ENCODE measurements at regions of chr1 and their contacts with region 1.

Region 1: DNA sequence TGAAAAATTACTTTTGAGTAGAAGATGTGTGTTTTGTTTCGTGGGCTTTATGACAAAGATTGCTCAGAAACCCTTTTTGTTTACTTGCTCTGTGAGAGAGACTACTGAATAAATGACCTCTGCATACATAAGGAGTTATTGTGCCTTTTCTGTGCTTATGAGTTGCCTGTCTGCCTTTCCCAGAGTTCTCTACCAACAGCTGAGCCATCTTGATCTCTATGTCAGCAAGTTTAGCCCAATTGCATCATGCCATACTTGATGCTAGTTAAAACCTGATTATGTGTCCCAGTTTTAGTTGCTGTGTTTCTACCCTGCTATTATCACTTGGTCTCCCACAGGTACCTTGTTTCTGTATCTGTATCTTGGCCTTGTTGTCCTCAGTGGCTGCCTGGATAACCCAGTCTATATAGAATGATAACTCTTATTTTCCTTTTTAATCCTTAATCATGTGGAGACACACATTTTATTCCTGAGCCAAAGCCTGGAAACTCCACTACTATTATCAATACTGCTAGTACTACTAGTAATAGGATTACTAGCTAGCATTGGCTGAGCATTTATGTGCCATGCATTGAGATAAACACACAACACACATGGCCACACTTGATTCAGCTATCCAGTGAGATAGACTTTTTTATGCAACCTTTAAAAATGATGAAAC is 28.7 kb upstream of the GNG12 start:
- DNase-seq: no peak
- ATAC-seq: no peak
- H3K4me3 ChIP-seq: no peak overlapping the region
- H3K27ac ChIP-seq: no peak overlapping the region
- H3K4me1 ChIP-seq: no peaks in the 10 kb centered on the region
- H3K27me3 ChIP-seq: no peaks in the 10 kb centered on the region
- CTCF ChIP-seq: no peak
- POLR2A ChIP-seq: no peak

Region 2: DNA sequence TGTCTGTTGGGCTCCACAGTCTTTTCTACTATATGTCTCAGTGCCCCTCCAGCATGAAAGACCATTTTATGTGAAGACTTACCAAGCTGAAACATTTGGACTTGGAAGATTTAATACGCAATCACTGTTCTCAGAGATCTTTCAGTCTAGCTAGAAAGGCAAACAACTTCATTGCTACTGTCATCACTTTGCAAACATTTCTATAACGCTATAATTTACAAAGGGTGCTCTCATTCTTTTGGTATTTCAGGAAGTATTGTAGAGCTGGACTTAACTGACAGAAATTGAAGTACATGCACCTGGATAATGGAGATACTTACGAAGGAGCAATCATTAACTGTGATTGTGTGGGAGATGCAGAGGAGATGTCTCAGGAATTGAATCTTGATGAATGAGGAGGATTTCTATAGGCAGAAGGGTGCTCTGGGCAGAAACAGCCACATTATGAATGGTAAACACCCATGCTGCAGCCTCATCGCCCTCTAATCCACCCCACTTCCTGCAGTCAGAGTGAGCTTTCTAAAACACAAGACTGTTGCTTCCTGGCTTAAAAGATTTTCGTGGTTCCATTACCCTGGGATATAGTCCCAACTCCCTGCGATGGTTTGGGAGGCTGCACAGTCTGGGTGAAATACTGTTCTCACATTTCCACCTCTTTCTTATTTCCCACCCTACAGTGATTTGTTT is 46.4 kb after region 1 on chr1:
- in situ Hi-C with region 1: no loop called
- intact Hi-C with region 1: no loop called
- DNase-seq: no peak
- ATAC-seq: no peak
- H3K4me3 ChIP-seq: no peak overlapping the region
- H3K27ac ChIP-seq: no peak overlapping the region
- H3K4me1 ChIP-seq: no peaks in the 10 kb centered on the region
- H3K27me3 ChIP-seq: no peaks in the 10 kb centered on the region
- CTCF ChIP-seq: no peak
- POLR2A ChIP-seq: no peak

Region 3: DNA sequence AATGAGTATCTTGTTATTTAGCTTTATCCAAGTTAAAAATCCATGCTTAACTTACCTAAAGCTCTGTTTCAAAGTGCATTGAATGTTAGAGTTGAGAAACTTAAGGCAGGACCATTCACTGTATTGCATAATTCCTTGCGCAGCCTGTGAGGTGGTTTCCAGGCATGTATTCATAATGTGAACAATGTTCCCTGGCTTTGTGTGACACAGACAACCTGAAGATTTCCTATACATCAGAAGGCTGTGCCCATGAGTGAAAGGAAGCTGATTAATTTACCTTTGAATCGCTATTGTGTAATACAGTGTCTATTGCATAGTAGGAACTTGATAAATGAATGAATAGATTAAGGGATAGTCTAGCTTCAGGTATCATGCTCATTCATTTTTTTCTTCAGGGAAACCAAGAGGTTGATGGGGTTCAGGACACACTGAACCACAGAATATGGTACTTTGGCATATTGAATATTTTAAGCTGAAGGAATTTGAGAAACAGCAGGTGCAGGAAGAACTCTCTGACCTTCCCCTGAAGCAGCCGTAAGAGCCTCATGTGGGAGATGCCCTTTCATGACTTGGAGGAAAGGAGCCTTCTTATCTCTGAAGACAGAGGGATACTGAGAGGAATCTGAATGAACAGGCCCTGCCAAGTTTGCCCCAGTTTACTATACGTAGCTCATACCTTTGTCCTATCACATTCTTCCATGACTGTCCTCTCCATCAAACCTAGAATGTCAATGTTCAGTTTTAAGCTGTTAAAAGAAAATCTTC is 59.9 kb after region 1 on chr1:
- in situ Hi-C with region 1: loop called in 1 of 4 experiments (anchors 10 kb)
- intact Hi-C with region 1: no loop called
- DNase-seq: no peak
- ATAC-seq: no peak
- H3K4me3 ChIP-seq: no peak overlapping the region
- H3K27ac ChIP-seq: no peak overlapping the region
- H3K4me1 ChIP-seq: no peaks in the 10 kb centered on the region
- H3K27me3 ChIP-seq: no peaks in the 10 kb centered on the region
- CTCF ChIP-seq: no peak
- POLR2A ChIP-seq: no peak